Activated CD4-positive, alpha-beta memory T cell treated with anti-CD3 and anti-CD28 coated beads, Interleukin-2, amount 10 ng/mL, durations not matched to agents 7 days and 5 days (primary cell): ENCODE measurements at regions of chr12 and their contacts with region 1.

Region 1: DNA sequence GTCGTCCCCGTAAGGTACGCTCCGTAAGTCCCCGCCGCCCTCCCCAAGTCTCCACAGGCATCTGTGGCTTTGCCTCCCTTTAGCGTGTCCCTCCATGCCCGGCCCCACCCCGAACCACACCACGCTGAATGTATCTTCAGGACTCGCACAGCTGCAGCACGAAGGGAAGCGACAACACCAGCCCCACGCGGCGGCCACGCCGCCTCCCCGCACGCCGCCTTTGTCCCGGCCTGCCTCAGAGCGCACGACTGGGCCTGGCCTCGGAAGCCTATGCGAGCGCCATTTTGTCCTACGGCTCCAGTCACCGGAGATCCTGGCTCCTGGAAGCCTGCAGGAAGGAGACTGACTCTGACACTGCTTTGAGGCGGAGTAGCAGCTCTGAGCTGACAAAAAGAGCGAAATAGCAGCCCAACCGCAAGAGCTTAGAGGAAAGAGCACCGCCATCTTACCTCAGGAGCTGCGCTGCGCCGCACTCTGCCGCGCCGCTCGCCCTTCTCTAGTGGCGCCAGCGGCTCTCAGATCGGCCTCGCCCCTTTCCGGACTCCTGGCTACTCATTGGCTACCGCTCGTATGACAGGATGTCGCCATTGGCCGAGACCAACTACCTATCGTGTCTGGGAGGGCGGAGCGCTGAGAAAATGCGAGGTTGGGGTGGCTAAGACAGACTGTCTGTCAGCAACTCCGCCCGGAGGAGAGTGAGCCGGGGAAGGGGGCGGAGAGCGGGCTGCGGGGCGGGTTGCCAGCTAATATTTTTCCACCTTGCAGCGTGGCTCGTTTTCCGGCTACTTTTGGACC is at the start of gene KANSL2:
- DNase-seq: peak; percentile 99
- H3K4me3 Mint-ChIP-seq: peak within 1 kb of the TSS; percentile 99
- H3K27ac Mint-ChIP-seq: peak within 1 kb of the TSS; percentile 91
- H3K4me1 Mint-ChIP-seq: peaks cover 44% of the 10 kb centered on the region
- H3K27me3 Mint-ChIP-seq: no peaks in the 10 kb centered on the region
- total RNA-seq, gene KANSL2: 40.3 to 42.2 TPM

Region 2: DNA sequence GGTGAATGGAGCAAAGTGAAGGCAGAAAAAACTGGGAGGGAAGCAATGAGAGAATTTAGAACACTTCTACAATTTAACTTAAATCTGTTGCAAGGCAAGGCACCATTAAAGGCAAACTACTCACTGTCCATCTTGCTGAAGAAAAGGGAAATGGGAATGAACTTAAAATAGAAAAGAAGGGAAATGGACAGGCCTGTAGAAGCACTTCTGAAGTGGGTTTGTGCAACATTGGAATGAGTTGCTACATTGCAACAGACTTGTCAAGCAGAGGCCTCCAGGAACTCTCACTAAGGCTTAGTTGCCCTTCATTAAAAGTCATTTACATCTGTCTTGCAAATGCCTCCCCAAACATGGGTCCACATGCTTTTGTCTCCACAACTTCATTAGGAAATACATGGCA is 465.1 kb before region 1 on chr12:
- CTCF ChIA-PET with region 1: no interaction called
- POLR2A ChIA-PET with region 1: no interaction called
- DNase-seq: no peak
- H3K4me3 Mint-ChIP-seq: no peak overlapping the region
- H3K27ac Mint-ChIP-seq: no peak overlapping the region
- H3K4me1 Mint-ChIP-seq: no peaks in the 10 kb centered on the region
- H3K27me3 Mint-ChIP-seq: peaks cover 18% of the 10 kb centered on the region

Region 3: GRCh38 chr12:48671231-48671856 is 10.6 kb before region 1 on chr12:
- CTCF ChIA-PET with region 1: no interaction called
- POLR2A ChIA-PET with region 1: interaction called, 33 read pairs
- DNase-seq: no peak
- H3K4me3 Mint-ChIP-seq: no peak overlapping the region
- H3K27ac Mint-ChIP-seq: no peak overlapping the region
- H3K4me1 Mint-ChIP-seq: peaks cover 8% of the 10 kb centered on the region
- H3K27me3 Mint-ChIP-seq: no peaks in the 10 kb centered on the region

Region 4: DNA sequence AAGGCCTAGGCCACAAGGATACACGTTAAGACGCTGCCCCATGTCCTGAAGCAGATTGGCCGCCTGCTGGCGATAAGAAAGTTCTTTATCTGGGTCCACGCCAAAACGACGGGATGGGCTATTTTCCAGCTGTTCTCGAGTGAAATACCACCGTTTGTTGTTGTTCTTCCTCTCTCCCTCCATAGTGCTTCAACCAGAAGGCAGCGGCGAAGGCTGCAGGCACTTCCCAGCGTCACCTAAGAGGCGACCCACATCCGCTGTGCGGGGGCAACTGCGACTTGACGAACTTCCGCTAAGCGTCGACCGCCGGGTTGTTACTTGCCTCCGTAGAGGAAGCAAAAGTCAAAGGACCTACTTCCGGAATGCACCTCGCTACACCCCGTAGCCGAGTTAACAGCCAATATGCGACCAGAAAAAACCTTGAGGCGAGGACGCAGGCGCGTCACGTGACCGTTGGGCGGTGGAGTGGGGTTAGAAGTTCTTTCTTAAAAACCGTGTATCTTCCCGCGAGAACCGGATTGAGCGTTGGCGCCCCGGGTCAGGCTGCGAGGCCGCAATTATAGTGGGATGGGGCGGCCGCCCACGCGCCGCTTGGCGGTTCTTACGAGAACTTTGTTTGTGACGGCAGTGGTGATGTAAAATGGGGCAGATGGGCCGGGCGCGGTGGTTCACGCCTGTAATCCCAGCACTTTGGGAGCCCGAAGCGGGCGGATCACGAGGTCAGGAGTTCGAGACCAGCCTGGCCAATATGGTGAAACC is 34.7 kb after region 1 on chr12 and contains the start of gene CCNT1:
- CTCF ChIA-PET with region 1: interaction called, 7 read pairs
- POLR2A ChIA-PET with region 1: interaction called, 52 read pairs
- DNase-seq: peak; percentile 99
- H3K4me3 Mint-ChIP-seq: peak within 1 kb of the TSS; percentile 87
- H3K27ac Mint-ChIP-seq: peak within 1 kb of the TSS; percentile 97
- H3K4me1 Mint-ChIP-seq: peaks cover 44% of the 10 kb centered on the region
- H3K27me3 Mint-ChIP-seq: no peaks in the 10 kb centered on the region
- total RNA-seq, gene CCNT1: 56.9 to 57.4 TPM